Aorta (tissue), 5 donors: ENCODE measurements at regions of chr7 and their contacts with region 1.

Region 1: DNA sequence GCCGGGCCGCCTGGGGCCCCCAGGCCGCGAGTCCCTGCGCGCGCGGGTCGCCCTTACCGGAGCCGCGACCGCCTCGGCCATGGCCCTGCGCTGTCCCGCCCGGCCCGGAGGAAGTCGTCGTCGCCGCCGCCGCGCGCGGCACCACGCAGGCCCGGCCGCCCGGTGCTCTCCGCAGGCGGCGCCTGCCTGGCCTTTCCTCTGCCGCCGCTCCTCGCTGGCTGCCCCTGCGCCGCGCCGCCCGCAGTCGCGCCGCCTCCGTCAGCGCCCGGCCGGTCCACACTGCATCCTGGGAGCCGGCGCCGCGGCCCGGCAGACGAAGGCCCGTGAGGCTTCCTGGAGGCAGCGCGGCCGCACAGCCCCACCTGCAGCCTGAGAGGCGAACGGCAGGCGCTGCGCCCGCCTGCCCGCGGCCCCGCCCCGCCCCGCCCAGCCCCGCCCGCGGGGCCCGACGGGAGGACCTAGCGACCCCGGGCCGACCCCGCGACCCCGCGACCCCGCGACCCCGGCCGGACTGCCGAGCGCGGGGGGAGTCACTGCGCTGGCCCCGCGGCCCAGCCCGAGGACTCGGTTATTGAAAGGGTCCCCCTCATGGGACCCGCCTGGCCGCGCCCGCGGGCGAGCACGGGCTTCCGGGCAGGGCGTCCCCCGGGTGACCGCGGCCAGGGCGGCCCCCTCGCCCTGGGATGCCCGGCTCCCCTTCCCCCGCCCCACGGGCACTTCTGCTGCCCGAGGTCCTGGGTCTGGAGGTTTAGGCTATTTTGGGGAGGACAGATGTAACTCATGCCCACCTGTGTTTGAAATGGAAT is at the start of gene ZNF746:
- DNase-seq: peak; percentile 89 to 94
- ATAC-seq: peak; percentile 89
- H3K4me3 ChIP-seq: peak within 1 kb of the TSS; percentile 91 to 92
- H3K27ac ChIP-seq: peak within 1 kb of the TSS; percentile 46 to 67
- H3K4me1 ChIP-seq: no peaks in the 10 kb centered on the region
- H3K27me3 ChIP-seq: no peaks in the 10 kb centered on the region
- total RNA-seq, gene ZNF746: 16.7 to 23.5 TPM

Region 2: GRCh38 chr7:149284850-149285626 is 212.6 kb before region 1 on chr7:
- intact Hi-C with region 1: loop called in 1 of 2 experiments (anchors 10 kb)
- DNase-seq: peak; percentile 96 to 97
- ATAC-seq: peak; percentile 94
- H3K4me3 ChIP-seq: peak overlapping the region; percentile 11 to 53
- H3K27ac ChIP-seq: no peak overlapping the region
- H3K4me1 ChIP-seq: no peaks in the 10 kb centered on the region
- H3K27me3 ChIP-seq: no peaks in the 10 kb centered on the region

Region 3: GRCh38 chr7:149422129-149422913 is 75.3 kb before region 1 on chr7:
- intact Hi-C with region 1: loop called in 1 of 2 experiments (anchors 5 kb)
- DNase-seq: peak; percentile 61 to 84
- ATAC-seq: peak; percentile 91
- H3K4me3 ChIP-seq: peak overlapping the region; percentile 25 to 30
- H3K27ac ChIP-seq: no peak overlapping the region
- H3K4me1 ChIP-seq: no peaks in the 10 kb centered on the region
- H3K27me3 ChIP-seq: no peaks in the 10 kb centered on the region

Region 4: DNA sequence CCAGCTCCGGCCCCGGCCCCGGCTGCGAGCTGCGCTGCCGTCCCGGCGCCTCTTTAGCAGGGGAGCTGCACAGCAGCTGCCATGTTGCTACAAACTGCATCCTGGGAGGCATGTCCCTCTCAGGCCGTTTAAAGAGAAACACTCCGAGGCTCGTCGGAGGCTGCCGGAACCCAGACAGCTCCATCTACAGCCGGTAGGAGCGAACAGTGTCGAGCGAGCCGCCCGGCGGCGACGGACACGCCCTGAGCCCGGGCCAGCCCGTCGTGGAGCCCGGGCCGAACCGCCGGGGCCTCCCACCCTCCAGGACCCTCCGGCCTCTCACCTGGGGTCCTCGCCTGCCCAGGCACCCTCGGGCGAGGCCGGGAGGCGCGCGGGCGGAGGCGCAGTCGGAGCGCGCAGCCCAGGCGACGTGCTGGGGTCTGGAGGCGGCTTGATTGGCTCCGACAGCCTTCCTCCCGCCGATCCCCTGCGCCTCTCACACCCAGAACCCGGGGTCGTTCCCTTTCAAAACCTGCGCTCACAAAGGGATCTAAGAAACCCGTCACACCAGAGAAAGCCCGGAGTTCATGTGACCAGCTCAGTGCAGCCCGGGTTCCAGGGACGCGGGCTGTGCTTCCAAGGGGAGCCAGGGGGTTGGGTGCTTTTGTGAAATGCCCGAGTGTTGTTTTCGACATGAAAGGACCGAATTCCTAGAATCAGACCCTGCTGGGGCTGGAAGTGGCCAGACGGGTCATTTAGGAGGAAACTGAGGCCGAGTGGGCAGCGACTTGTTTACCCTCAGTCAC is 37.0 kb before region 1 on chr7 and contains the start of gene ZNF777:
- intact Hi-C with region 1: loop called in 1 of 2 experiments (anchors 5 kb)
- DNase-seq: peak; percentile 89 to 93
- ATAC-seq: peak; percentile 93
- H3K4me3 ChIP-seq: peak within 1 kb of the TSS; percentile 90 to 100
- H3K27ac ChIP-seq: peak within 1 kb of the TSS in 1 of 2 donors; percentile 33
- H3K4me1 ChIP-seq: no peaks in the 10 kb centered on the region
- H3K27me3 ChIP-seq: no peaks in the 10 kb centered on the region
- total RNA-seq, gene ZNF777: 7.8 to 9.4 TPM

Region 5: DNA sequence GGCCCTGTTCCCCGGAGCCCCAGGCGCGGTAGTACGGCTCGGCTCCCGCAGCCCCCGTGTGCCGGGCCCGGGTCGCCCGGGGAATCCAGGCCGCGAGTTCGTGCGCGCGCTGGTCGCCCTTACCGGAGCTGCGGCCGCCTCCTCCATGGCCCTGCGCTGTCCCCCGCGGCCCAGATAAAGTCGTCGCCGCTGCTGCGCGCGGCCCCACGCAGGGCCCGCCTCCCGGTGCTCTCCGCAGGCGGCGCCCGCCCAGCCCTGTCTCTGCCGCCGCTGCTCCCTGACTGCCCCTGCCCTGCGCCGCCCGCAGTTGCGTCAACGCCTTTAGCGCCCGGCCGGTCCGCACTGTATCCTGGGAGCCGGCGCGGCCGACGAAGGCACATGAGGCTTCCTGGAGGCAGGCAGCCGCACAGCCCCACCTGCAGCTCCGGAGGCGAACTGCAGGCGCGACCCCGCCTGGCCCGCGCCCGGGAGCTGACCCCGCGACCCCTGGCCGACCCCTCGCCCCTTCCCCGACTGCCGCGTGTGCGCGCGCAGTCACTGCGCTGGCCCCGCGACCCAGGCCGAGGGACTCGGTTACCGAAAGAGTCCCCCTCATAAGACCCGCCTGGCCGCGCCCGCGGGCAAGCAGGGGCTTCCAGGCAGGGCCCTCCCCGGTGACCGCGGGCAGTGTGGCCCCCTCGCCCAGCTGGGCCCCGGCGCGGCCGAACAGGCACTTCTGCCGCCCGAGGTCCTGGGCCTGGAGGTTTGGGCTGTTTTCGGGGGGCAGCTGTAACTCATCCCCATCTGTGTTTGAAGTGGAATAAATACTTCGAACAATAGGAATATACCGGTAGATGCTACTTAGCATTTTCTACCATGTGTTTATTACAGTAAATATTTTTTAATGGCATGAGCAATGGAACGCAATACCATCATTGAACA is 127.0 kb after region 1 on chr7:
- intact Hi-C with region 1: loop called in 1 of 2 experiments (anchors 2 kb)
- DNase-seq: peak; percentile 97 to 98
- ATAC-seq: peak; percentile 97
- H3K4me3 ChIP-seq: peak overlapping the region; percentile 72 to 94
- H3K27ac ChIP-seq: peak overlapping the region; percentile 28 to 49
- H3K4me1 ChIP-seq: no peaks in the 10 kb centered on the region
- H3K27me3 ChIP-seq: no peaks in the 10 kb centered on the region